Ascending aorta (tissue), 2 donors: ENCODE measurements at regions of chr17 and their contacts with region 1.

Region 1: GRCh38 chr17:61490540-61491412 is 38.6 kb downstream of the TBX4 start:
- DNase-seq: peak in 1 of 2 donors; percentile 50
- H3K4me3 ChIP-seq: no peak overlapping the region
- H3K27ac ChIP-seq: no peak overlapping the region
- H3K4me1 ChIP-seq: peaks cover 0 to 2% of the 10 kb centered on the region in 2 donors
- H3K27me3 ChIP-seq: no peaks in the 10 kb centered on the region
- CTCF ChIP-seq: no peak

Region 2: DNA sequence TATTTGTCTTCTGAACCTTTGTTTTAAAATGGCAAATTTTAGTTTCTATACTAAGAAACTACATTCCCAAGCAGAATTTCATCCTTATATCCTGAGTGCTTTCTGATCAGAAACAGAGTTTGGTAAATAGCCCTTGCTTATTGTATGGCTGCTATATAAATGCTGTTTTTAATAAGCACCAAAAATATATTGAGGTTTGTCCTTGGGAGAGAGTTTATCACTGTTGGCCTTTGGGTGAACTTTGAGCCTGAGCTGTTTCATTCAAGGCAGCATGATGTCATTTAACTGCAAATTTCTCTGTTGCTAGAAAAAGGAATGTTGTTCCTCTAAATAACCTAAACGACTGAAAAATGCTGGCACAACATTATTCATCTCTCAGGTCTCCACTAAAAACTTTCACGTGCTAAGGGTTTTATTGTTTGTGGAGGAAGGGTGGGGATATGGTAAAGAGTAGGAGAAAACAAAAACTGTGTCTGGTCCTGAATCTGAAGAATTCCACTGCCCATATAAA is 425.5 kb before region 1 on chr17:
- intact Hi-C with region 1: no loop called
- DNase-seq: no peak
- H3K4me3 ChIP-seq: no peak overlapping the region
- H3K27ac ChIP-seq: peak overlapping the region in 1 of 2 donors; percentile 7
- H3K4me1 ChIP-seq: peaks cover 0 to 11% of the 10 kb centered on the region in 2 donors
- H3K27me3 ChIP-seq: no peaks in the 10 kb centered on the region
- CTCF ChIP-seq: no peak

Region 3: DNA sequence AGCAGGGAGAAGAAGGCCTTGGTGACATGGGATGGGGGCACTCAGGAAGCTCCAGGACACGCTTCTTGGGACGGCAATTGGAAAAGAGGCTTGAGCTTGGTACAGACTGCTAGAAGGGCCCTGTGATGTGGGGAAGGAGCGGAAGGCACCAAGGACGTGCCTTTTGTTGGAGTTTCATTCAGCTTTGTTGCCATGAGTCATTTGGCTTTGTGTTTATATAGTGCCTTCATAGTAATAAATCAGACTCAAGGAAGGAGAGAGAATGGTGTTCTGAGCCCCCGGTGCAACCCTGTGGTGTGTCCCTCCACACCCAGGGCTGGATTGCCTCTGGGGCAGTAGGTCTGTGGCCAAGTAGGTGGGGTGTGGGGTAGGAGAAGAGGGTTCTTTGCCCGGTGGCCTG is 45.9 kb before region 1 on chr17:
- intact Hi-C with region 1: loop called (anchors 5 kb)
- DNase-seq: no peak
- H3K4me3 ChIP-seq: no peak overlapping the region
- H3K27ac ChIP-seq: no peak overlapping the region
- H3K4me1 ChIP-seq: no peaks in the 10 kb centered on the region
- H3K27me3 ChIP-seq: no peaks in the 10 kb centered on the region
- CTCF ChIP-seq: no peak

Region 4: GRCh38 chr17:61583242-61583641 is 92.5 kb after region 1 on chr17:
- intact Hi-C with region 1: no loop called
- DNase-seq: no peak
- H3K4me3 ChIP-seq: no peak overlapping the region
- H3K27ac ChIP-seq: no peak overlapping the region
- H3K4me1 ChIP-seq: no peaks in the 10 kb centered on the region
- H3K27me3 ChIP-seq: no peaks in the 10 kb centered on the region
- CTCF ChIP-seq: peak in 1 of 3 experiments; percentile 8